RWPE1 (cell line): ENCODE measurements at regions of chr20 and their contacts with region 1.

Region 1: DNA sequence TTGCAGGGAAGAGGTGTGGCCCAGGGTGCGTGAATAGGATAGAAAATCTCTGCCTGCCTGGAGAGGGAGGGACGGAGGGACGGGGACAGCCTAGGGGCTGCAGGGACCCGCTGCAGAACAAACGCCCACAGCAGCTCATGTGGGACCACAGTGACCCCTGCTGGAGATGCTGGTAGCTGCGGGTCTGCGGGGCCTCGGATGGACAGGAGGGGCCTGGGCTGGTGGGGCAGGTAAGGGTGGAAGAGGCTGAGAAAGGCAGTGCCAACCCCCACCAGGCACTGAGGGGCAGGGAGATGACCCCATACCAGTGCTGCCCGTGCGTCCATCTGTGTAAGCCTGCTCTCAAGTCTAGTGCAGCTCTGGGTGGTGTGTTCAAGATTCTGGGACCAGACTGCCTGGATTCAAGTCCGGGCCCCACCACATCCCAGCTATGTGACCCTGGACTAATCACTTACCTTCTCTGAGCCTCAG is 39.4 kb downstream of the KIAA1755 start:
- DNase-seq: peak; percentile 94
- H3K27ac ChIP-seq: no peak overlapping the region
- CTCF ChIP-seq: peak; percentile 99

Region 2: GRCh38 chr20:37564388-37565133 is 656.6 kb before region 1 on chr20:
- CTCF ChIA-PET with region 1: interaction called, 19 read pairs
- POLR2A ChIA-PET with region 1: no interaction called
- DNase-seq: peak; percentile 84
- H3K27ac ChIP-seq: no peak overlapping the region
- CTCF ChIP-seq: peak; percentile 99

Region 3: GRCh38 chr20:38073307-38074071 is 147.7 kb before region 1 on chr20:
- CTCF ChIA-PET with region 1: interaction called, 55 read pairs
- POLR2A ChIA-PET with region 1: no interaction called
- DNase-seq: peak; percentile 80
- H3K27ac ChIP-seq: no peak overlapping the region; the same call in 1 of the 2 replicates
- CTCF ChIP-seq: peak; percentile 89

Region 4: DNA sequence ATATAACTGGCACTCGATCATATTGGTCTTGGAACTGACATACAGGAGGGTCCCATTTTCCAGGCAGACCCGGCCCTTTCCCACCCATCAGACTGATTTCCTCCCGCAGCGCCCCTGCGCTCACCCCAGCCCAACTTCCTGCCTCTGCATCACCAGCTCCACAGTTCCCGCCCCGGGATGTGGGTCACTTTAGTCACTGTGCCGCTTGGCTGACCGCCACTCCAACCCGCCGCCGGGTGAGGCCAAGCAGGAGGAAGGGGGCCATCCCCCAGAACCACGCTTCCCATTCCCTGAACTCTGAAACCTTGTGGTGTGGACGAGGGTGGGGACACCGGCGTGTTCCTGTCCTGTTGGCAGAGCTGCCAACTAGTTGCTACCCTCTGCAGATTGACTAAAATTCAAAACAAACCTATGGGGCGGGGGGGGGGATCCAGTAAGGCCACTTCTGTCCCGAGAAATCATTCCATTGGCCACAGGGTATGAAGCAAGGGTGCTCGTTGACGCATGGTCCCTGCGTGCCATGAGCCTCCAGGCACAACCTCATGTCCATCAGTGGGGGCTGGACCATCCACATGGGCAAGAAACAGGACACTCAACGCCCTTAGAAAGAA is 68.4 kb before region 1 on chr20:
- CTCF ChIA-PET with region 1: interaction called, 12 read pairs
- POLR2A ChIA-PET with region 1: no interaction called
- DNase-seq: peak; percentile 81
- H3K27ac ChIP-seq: peak overlapping the region; percentile 76
- CTCF ChIP-seq: no peak

Region 5: DNA sequence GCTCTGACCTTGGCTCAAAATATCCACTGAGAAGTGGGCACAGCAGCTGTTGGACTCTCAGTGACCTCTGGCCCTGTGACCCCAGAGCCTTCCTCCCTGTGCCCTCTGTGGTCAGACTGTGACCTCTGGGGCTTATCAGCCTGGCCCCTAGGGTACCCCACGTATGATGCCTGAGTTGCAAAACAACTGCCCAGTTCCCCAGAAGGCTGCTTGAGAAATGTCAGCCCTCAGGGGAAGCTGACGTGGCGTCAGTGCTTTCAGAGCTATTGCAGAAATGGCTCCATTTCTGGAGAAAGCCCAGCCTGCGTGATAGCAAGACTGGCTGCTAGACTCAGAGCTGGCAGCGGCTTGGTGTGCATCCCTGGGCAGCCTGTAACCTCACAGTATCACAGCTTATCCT is 24.6 kb before region 1 on chr20:
- CTCF ChIA-PET with region 1: interaction called, 15 read pairs
- POLR2A ChIA-PET with region 1: interaction called, 3 read pairs
- DNase-seq: peak; percentile 64
- H3K27ac ChIP-seq: peak overlapping the region; percentile 7; the same call in 1 of the 2 replicates
- CTCF ChIP-seq: no peak

Region 6: GRCh38 chr20:38412877-38413577 is 191.9 kb after region 1 on chr20:
- CTCF ChIA-PET with region 1: interaction called, 10 read pairs
- POLR2A ChIA-PET with region 1: no interaction called
- DNase-seq: no peak
- H3K27ac ChIP-seq: 0 out of 2 replicates have a peak overlapping the region, but pooled peaks have one; percentile 1
- CTCF ChIP-seq: no peak